ENCODE measurements at regions of chr14 and their contacts with region 1.

Region 1: GRCh38 chr14:59428581-59429012 is 36.6 kb downstream of the GPR135 start:
- DNase-seq: no peak
- ATAC-seq: peak; percentile 10

Region 2: GRCh38 chr14:59107819-59108428 is 320.7 kb before region 1 on chr14:
- intact Hi-C with region 1: no loop called
- DNase-seq: no peak
- ATAC-seq: no peak

Region 3: DNA sequence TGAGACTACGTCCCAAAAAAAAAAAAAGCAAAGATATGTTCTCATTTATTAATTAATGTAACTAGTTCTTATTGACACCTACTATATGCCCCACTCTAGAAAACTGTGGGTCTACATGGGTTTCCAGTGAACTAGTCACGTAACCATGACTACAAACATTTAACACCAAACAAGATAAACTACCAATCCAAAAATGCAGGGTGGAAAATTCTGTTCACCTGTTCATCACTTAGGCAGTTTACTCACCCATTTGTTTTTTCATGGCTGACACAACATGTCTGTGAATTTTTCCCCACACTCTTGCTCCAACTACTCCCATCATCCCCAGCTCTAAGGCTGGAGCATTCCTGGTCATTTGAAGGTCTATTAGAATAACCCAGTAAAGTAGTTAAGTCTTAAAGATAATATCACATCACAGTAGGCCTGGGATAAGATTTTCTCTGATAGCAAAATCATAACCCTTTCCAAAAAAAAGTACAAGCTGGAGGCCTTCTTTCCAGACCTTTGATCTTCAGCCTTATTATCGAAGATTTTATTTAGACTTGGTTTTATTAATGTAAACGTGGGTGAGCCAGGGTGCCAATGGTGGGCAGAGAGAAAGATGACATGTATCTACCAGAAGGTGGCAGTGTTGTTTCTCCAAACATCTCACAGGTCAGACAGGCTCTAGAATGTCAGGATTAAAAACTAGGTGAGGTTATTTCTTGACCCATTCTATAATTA is 301.7 kb before region 1 on chr14:
- intact Hi-C with region 1: loop called (anchors 5 kb)
- DNase-seq: no peak
- ATAC-seq: peak; percentile 90

Region 4: GRCh38 chr14:59333668-59334067 is 94.9 kb before region 1 on chr14:
- intact Hi-C with region 1: loop called (anchors 10 kb)
- DNase-seq: no peak
- ATAC-seq: peak; percentile 93

Region 5: DNA sequence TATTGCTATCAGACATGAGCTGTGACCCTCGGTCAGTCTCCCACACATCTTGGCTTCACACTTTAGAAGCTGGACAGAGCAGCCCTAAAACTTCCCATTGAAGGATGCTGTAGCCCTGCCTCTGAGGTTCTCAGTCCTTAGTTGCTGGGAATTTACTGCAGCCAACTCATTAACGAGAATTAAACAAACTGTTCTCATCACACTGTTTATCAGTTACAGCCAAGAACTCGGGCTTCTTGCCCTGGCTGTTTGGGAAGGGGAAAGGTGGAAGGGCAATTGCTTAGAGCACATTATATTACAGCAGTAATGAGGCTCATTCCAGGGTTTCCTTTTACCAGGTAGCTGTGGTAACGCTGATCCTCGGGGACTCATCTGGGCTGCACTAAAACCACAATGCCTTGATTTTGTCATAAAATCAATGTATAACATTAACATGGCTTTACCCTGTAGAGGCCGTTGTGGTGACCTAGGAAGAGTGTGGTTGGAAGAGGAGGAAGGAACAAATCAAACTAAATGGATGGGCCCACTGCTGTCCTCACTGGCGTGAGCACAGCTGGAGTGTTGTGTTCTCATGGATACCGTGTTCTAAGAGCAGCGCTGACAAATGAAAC is 50.5 kb before region 1 on chr14:
- intact Hi-C with region 1: loop called (anchors 10 kb)
- DNase-seq: no peak
- ATAC-seq: peak; percentile 80

Region 6: DNA sequence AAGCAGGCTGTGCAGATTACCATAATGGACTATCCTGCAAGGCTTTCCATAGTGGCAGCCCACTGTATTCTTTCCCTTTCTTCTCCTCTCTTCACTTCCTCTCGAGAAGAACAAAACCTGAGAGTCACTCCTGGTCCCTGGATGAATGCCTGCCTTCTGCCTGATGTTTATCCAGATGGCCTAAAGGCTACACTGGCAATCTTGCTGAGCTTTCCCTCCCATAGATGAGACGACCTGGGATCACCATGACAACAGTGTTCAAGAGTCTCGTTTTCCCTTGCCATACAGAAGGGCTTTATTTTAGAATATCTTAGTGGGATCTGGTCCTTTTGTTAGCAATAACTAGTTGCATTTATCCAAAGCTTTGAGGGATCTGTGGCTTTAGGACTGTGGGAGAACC is 299.7 kb after region 1 on chr14:
- intact Hi-C with region 1: no loop called
- DNase-seq: no peak
- ATAC-seq: no peak